Lower leg skin (tissue), 4 donors: ENCODE measurements at regions of chr17 and their contacts with region 1.

Region 1: DNA sequence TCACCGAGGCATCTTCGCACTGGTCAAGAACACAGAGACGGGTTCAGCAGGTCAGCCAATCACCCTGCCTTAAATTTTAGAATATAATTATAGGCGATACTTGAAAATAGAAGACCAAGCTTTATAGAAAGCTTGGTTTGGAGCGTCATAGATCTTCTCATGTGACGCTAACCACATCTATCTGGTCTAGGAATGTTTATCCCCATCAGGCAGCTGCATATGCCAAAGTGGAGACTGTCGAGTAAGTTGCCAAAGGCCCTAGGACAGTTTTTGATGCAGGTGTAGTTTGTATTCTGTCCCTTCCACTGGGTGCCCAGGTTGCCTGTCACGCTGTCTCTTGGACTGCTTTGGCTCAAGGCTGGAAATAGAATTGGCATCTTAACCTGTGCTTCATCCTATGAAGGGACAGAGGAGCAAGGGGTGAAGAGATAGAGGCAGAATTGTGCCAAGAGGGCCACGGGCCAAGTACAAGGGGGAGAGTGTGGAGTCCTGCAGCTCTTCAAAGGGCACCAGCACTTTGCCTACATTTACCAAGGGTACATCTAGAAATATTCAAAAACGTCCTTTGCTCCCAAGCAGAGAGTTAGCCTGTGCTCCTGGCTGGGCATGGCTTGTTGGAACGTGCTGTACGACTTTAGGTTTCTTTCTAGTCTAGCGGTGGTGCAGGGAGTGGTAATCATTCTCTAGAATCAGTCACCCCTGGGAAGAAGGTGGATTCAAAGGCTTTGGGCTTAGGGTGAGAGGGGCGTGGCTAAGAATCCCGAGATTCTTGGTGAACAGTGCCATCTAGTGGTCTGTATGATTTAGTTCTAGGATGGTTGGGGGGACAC is 5.3 kb upstream of the WIPI1 start:
- DNase-seq: peak; percentile 72 to 89
- H3K4me3 ChIP-seq: no peak overlapping the region
- CTCF ChIP-seq: peak in 1 of 3 donors; percentile 64
- POLR2A ChIP-seq: no peak

Region 2: GRCh38 chr17:67959288-67959900 is 503.2 kb before region 1 on chr17:
- intact Hi-C with region 1: loop called (anchors 10 kb)
- DNase-seq: no peak
- H3K4me3 ChIP-seq: no peak overlapping the region
- CTCF ChIP-seq: no peak
- POLR2A ChIP-seq: no peak

Region 3: GRCh38 chr17:68172461-68172954 is 290.1 kb before region 1 on chr17:
- intact Hi-C with region 1: loop called (anchors 10 kb)
- DNase-seq: peak; percentile 72 to 94
- H3K4me3 ChIP-seq: no peak overlapping the region
- CTCF ChIP-seq: peak in 1 of 3 donors; percentile 79
- POLR2A ChIP-seq: no peak

Region 4: GRCh38 chr17:68247445-68248198 is 215.0 kb before region 1 on chr17 and contains the start of gene AMZ2:
- intact Hi-C with region 1: no loop called
- DNase-seq: peak; percentile 91 to 99
- H3K4me3 ChIP-seq: peak within 1 kb of the TSS; percentile 58
- CTCF ChIP-seq: no peak
- POLR2A ChIP-seq: peak in 1 of 2 donors; percentile 63
- total RNA-seq, gene AMZ2: 25.8 to 55.0 (median 46.2) TPM

Region 5: GRCh38 chr17:68260051-68260762 is 202.4 kb before region 1 on chr17:
- intact Hi-C with region 1: loop called (anchors 10 kb)
- DNase-seq: no peak
- H3K4me3 ChIP-seq: no peak overlapping the region
- CTCF ChIP-seq: no peak
- POLR2A ChIP-seq: no peak

Region 6: GRCh38 chr17:68398691-68399637 is 63.6 kb before region 1 on chr17:
- intact Hi-C with region 1: no loop called
- DNase-seq: peak in 1 of 2 donors; percentile 87
- H3K4me3 ChIP-seq: no peak overlapping the region
- CTCF ChIP-seq: no peak
- POLR2A ChIP-seq: no peak

Region 7: DNA sequence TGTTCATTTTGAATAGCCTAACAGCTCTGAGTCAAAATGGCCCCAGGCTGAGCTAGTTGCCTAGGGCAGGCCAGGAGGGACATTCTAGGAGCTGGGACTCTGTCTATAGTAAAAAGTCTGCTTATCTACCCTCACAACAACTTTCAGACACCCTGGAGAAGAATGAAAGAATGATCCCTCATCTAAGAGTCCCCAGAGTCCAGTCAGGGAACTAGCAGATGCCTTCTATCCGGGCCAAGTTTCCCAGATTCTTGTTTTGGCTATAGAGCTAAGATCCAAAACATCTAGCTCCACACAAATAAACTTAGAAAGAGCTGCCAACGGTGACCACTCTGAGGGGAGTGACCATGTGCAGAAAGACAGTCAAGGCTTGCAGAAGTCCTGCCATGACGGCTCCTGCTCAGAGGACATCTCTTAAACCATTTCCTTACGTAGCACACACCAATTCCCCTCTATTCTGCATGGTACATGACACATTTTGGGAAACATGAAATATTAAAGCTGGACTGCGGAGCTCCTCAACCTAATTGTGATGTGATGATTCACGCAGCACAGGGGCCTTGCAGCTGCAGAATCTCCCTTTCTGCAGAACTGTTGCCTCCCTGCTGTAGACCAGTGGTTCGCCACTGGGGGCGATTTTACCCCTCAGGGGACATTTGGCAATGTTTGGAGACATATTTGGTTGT is 114.4 kb after region 1 on chr17:
- intact Hi-C with region 1: no loop called
- DNase-seq: no peak
- H3K4me3 ChIP-seq: no peak overlapping the region
- CTCF ChIP-seq: no peak
- POLR2A ChIP-seq: no peak

Region 8: GRCh38 chr17:68591583-68591982 is 129.0 kb after region 1 on chr17:
- intact Hi-C with region 1: no loop called
- DNase-seq: no peak
- H3K4me3 ChIP-seq: no peak overlapping the region
- CTCF ChIP-seq: no peak
- POLR2A ChIP-seq: no peak